IMR-90 (cell line): ENCODE measurements at regions of chr21 and their contacts with region 1.

Region 1: GRCh38 chr21:37017951-37018679 is 11.6 kb downstream of the RIPPLY3 start:
- DNase-seq: no peak
- ATAC-seq: no peak
- H3K4me3 ChIP-seq: no peak overlapping the region
- H3K27ac ChIP-seq: no peak overlapping the region
- H3K4me1 ChIP-seq: no peaks in the 10 kb centered on the region
- H3K27me3 ChIP-seq: peaks cover 15% of the 10 kb centered on the region
- CTCF ChIP-seq: no peak
- POLR2A ChIP-seq: no peak
- RAD21 ChIP-seq: no peak

Region 2: DNA sequence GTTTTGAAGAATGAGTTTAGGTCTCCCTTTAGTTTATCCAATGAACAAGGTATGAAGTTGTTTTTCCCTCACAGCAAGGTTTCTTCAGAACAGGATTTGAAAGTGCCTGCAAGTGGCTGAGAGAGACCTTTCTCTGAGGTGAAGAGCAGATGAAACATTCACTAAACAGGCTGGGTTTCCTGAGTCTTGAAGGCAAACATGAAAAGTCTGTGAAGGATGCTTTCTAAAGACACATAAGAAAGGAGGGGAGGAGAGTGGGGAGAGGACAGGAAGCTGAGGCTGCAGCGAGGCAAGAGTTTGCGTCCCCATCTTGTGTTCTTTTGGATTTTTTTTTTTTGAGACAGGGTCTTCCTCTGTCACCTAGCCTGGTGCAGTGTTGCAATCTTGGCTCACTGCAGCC is 414.9 kb before region 1 on chr21:
- CTCF ChIA-PET with region 1: no interaction called
- POLR2A ChIA-PET with region 1: no interaction called
- dilution Hi-C with region 1: no loop called
- in situ Hi-C with region 1: no loop called
- intact Hi-C with region 1: no loop called
- DNase-seq: no peak
- ATAC-seq: no peak
- H3K4me3 ChIP-seq: no peak overlapping the region
- H3K27ac ChIP-seq: no peak overlapping the region
- H3K4me1 ChIP-seq: no peaks in the 10 kb centered on the region
- H3K27me3 ChIP-seq: peaks cover 63% of the 10 kb centered on the region
- CTCF ChIP-seq: no peak
- POLR2A ChIP-seq: no peak
- RAD21 ChIP-seq: no peak

Region 3: GRCh38 chr21:37060296-37060695 is 42.2 kb after region 1 on chr21:
- CTCF ChIA-PET with region 1: no interaction called
- POLR2A ChIA-PET with region 1: interaction called, 12 read pairs
- dilution Hi-C with region 1: no loop called
- in situ Hi-C with region 1: no loop called
- intact Hi-C with region 1: no loop called
- DNase-seq: peak; percentile 98
- ATAC-seq: peak; percentile 96
- H3K4me3 ChIP-seq: no peak overlapping the region
- H3K27ac ChIP-seq: peak overlapping the region; percentile 4; the same call in 1 of the 2 replicates
- H3K4me1 ChIP-seq: peaks cover 17% of the 10 kb centered on the region
- H3K27me3 ChIP-seq: no peaks in the 10 kb centered on the region
- CTCF ChIP-seq: peak; percentile 23; the same call in 1 of the 2 replicates
- POLR2A ChIP-seq: no peak
- RAD21 ChIP-seq: no peak; the same call in 1 of the 2 replicates